ENCODE measurements at regions of chr1 and their contacts with region 1.

Region 1: GRCh38 chr1:15323351-15323988 is 76.4 kb downstream of the FHAD1 start:
- DNase-seq: peak; percentile 69 to 76 (median 73)
- H3K4me3 ChIP-seq: no peak overlapping the region
- H3K4me3 Mint-ChIP-seq: no peak overlapping the region
- H3K27ac ChIP-seq: no peak overlapping the region
- H3K27ac Mint-ChIP-seq: no peak overlapping the region
- H3K4me1 ChIP-seq: peaks cover 6 to 8% of the 10 kb centered on the region in 2 donors
- H3K4me1 Mint-ChIP-seq: peaks cover 15% of the 10 kb centered on the region
- H3K27me3 ChIP-seq: no peaks in the 10 kb centered on the region
- H3K27me3 Mint-ChIP-seq: peaks cover 7 to 10% (median 8%) of the 10 kb centered on the region in 3 donors
- CTCF ChIP-seq: peak; percentile 92

Region 2: GRCh38 chr1:15345711-15346355 is 22.4 kb after region 1 on chr1:
- intact Hi-C with region 1: loop called in 1 of 2 experiments (anchors 2 kb)
- DNase-seq: peak; percentile 92 to 95 (median 95)
- H3K4me3 ChIP-seq: peak overlapping the region in 1 of 3 experiments; percentile 61
- H3K4me3 Mint-ChIP-seq: peak overlapping the region; percentile 48 to 85
- H3K27ac ChIP-seq: peak overlapping the region; percentile 68 to 80
- H3K27ac Mint-ChIP-seq: peak overlapping the region; percentile 87 to 94 (median 93)
- H3K4me1 ChIP-seq: peaks cover 63 to 66% of the 10 kb centered on the region in 2 donors
- H3K4me1 Mint-ChIP-seq: peaks cover 62% of the 10 kb centered on the region
- H3K27me3 ChIP-seq: no peaks in the 10 kb centered on the region
- H3K27me3 Mint-ChIP-seq: peaks cover 2 to 17% (median 4%) of the 10 kb centered on the region in 3 donors
- CTCF ChIP-seq: no peak

Region 3: GRCh38 chr1:15417365-15417934 is 94.0 kb after region 1 on chr1:
- intact Hi-C with region 1: loop called in 1 of 2 experiments (anchors 5 kb)
- DNase-seq: peak; percentile 87 to 96 (median 94)
- H3K4me3 ChIP-seq: peak overlapping the region; percentile 13 to 100 (median 25)
- H3K4me3 Mint-ChIP-seq: peak overlapping the region; percentile 77 to 87
- H3K27ac ChIP-seq: peak overlapping the region; percentile 95
- H3K27ac Mint-ChIP-seq: peak overlapping the region; percentile 98 to 99 (median 99)
- H3K4me1 ChIP-seq: peaks cover 94 to 100% of the 10 kb centered on the region in 2 donors
- H3K4me1 Mint-ChIP-seq: peaks cover 89% of the 10 kb centered on the region
- H3K27me3 ChIP-seq: no peaks in the 10 kb centered on the region
- H3K27me3 Mint-ChIP-seq: peaks cover 0 to 2% (median 2%) of the 10 kb centered on the region in 3 donors
- CTCF ChIP-seq: no peak

Region 4: GRCh38 chr1:15501208-15502032 is 177.9 kb after region 1 on chr1:
- intact Hi-C with region 1: loop called (anchors 5 to 10 kb)
- DNase-seq: peak; percentile 36 to 55 (median 48)
- H3K4me3 ChIP-seq: no peak overlapping the region
- H3K4me3 Mint-ChIP-seq: no peak overlapping the region
- H3K27ac ChIP-seq: no peak overlapping the region
- H3K27ac Mint-ChIP-seq: no peak overlapping the region
- H3K4me1 ChIP-seq: no peaks in the 10 kb centered on the region
- H3K4me1 Mint-ChIP-seq: no peaks in the 10 kb centered on the region
- H3K27me3 ChIP-seq: no peaks in the 10 kb centered on the region
- H3K27me3 Mint-ChIP-seq: peaks cover 0 to 1% (median 0%) of the 10 kb centered on the region in 3 donors
- CTCF ChIP-seq: peak; percentile 79